ENCODE measurements at regions of chr16 and their contacts with region 1.

Region 1: DNA sequence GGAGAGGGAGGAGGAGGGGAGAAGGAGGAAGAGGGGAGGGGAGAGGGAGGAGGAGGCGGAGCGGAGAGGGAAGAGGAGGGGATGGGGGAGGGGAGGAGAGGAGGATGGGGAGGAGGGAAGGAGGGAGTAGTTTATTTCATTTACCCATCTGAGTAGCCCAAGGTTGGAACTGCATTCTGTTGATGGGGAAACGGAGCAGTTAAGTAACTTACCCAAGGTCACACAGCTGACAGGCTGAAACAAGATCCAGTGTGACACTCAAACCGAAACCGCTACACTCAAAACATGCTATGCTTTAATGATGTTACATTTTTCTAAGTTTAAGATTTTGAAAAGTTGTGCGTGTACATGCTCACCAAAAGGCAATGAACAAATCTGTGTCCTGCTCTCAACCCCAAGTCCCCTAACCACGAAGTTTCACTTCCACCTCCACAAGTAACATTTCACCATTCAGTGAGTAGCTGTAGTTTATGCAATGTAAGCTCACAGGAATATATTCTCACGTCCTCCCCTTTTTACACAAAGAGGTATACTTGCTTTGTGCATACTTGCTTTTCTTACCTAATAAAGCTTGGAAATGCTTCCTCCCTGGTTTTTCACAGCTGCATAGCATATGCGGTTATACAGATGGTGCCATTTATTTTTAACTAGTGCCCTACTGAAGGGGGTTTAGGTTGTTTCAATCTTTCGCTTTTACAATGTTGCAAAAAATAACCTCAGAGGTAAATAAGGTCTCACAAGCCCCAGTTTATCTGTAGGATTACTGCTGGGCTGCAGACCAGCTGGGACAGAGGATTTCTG is 275.3 kb downstream of the PARN start:
- DNase-seq: peak; percentile 23
- H3K4me3 ChIP-seq: peak overlapping the region in 1 of 3 experiments; percentile 17
- H3K27ac ChIP-seq: no peak overlapping the region
- H3K4me1 ChIP-seq: peaks cover 21% of the 10 kb centered on the region
- H3K27me3 ChIP-seq: no peaks in the 10 kb centered on the region
- CTCF ChIP-seq: no peak

Region 2: GRCh38 chr16:14310519-14310991 is 44.2 kb before region 1 on chr16:
- CTCF ChIA-PET with region 1: no interaction called
- dilution Hi-C with region 1: no loop called
- in situ Hi-C with region 1: no loop called
- intact Hi-C with region 1: loop called (anchors 5 kb)
- DNase-seq: no peak
- H3K4me3 ChIP-seq: no peak overlapping the region
- H3K27ac ChIP-seq: peak overlapping the region; percentile 95
- H3K4me1 ChIP-seq: peaks cover 53% of the 10 kb centered on the region
- H3K27me3 ChIP-seq: no peaks in the 10 kb centered on the region
- CTCF ChIP-seq: peak in 1 of 2 donors; percentile 4

Region 3: DNA sequence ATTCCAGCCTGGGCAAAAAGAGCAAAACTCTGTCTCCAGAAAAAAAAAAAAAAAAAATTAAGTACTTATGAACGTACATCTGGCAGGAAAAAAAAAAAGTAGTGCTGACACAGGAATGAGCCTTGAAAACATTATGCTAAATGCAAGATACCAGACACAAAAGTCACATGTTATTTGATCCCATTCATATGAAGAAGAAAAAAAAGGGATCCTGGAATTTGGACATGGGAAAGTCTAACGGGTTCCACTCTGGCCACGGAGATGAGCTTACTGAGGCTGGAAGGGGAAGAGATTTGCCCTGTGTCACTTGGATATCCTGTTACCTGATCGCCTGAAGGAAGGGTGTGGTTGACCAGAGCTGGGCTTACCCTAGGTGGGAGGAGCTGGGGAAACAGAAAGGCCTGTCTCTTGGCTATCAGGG is 23.4 kb after region 1 on chr16:
- CTCF ChIA-PET with region 1: no interaction called
- dilution Hi-C with region 1: no loop called
- in situ Hi-C with region 1: no loop called
- intact Hi-C with region 1: loop called (anchors 2 kb)
- DNase-seq: peak; percentile 84
- H3K4me3 ChIP-seq: no peak overlapping the region
- H3K27ac ChIP-seq: peak overlapping the region; percentile 53
- H3K4me1 ChIP-seq: peaks cover 31% of the 10 kb centered on the region
- H3K27me3 ChIP-seq: no peaks in the 10 kb centered on the region
- CTCF ChIP-seq: no peak

Region 4: DNA sequence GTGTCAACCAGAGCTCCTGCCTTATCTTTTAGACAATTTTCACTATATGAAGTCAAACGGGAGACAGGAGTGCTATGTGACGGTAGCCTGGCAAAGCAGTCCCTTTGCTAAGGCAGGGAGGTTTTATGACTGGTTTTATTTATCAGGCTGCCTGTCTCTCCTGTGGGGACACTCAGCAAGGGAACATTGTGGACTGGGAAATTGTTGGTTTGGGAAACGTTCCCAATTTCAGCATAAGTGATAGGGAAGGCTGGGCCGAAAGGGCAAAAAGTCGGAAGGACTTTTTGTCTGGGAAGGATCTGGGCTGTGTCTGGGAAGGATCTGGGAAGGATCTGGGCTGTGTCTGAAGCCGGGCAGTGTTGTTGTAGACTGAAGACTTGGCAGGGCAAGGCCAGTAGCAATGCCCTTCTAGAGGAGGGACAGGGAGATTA is 64.1 kb after region 1 on chr16:
- CTCF ChIA-PET with region 1: no interaction called
- dilution Hi-C with region 1: no loop called
- in situ Hi-C with region 1: loop called in 1 of 2 experiments (anchors 10 kb)
- intact Hi-C with region 1: no loop called
- DNase-seq: no peak
- H3K4me3 ChIP-seq: no peak overlapping the region
- H3K27ac ChIP-seq: no peak overlapping the region
- H3K4me1 ChIP-seq: no peaks in the 10 kb centered on the region
- H3K27me3 ChIP-seq: no peaks in the 10 kb centered on the region
- CTCF ChIP-seq: no peak